ENCODE measurements at regions of chr1 and their contacts with region 1.

Region 1: DNA sequence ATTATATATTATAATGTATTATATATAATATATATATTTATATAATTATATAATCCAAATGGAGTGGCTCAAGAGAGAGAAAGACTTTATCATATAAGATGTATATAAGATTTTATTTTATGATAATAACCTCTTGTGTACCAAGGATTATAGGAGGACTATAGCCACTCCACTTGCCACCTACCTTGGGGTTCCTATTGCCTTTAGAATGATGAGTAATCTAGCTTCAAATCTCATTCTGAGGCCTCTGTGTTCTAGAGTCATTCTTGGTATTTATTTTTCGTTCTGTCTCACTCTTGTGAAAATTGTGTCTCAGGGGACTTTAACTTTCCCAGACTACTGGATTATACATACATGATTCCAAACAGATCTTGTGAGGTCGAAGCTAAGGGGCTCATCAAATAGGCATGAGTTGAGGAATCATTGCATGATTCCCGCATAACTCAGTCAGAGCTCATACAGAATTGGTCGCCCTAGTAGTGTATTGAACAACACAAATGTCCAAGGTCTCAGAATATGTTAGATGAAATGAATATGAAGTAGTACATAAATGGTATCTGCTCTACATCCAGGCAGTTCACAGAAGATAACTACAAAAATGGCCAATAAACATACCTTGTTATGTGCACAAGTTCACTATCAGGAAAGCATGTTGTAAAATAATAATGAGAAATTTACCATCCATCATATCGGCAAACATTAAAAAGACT is 159.5 kb upstream of the RNPC3 start:
- DNase-seq: no peak
- H3K4me3 Mint-ChIP-seq: no peak overlapping the region
- H3K27ac Mint-ChIP-seq: no peak overlapping the region
- H3K4me1 Mint-ChIP-seq: no peaks in the 10 kb centered on the region
- H3K27me3 Mint-ChIP-seq: no peaks in the 10 kb centered on the region

Region 2: DNA sequence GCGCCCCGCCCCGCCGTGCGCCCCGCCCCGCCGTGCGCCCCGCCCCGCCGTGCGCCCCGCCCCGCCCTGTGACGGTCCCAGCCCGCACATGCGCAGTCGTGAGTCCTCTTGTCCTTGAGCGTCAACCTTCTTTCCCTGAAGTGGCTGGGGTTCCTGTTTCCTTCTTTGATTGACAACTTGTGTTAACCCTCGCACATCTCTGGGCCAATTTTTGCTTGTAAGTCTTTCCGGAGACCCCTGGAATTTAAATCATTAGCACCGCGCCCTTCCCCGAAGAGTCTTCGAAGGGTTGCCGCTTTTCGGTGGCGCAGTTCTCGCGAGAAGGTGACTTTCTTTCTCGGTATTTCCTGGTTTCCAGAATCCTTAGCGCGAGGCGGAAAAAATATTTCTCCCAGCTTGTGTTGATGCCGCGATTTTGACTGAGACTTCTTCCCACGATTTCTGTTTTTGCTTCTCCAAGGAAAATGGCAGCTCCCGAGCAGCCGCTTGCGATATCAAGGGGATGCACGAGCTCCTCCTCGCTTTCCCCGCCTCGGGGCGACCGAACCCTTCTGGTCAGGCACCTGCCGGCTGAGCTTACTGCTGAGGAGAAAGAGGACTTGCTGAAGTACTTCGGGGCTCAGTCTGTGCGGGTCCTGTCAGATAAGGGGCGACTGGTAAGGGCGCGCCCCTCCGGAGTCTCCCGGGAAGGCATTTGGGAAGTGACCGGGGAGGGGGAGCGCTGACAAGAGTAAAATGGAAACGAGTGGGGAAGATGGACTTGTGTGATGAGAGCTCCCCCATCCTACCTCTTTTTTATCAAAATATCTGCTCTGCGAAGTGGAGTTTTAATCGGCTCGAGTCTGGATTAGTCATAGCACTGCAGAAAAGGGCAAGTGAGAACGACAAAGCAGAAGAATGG is 159.8 kb after region 1 on chr1 and contains the start of gene RNPC3:
- intact Hi-C with region 1: loop called (anchors 10 kb)
- DNase-seq: peak; percentile 79
- H3K4me3 Mint-ChIP-seq: peak within 1 kb of the TSS; percentile 100
- H3K27ac Mint-ChIP-seq: peak within 1 kb of the TSS; percentile 99
- H3K4me1 Mint-ChIP-seq: peaks cover 46% of the 10 kb centered on the region
- H3K27me3 Mint-ChIP-seq: peaks cover 7% of the 10 kb centered on the region
- total RNA-seq, gene RNPC3: 15.9 and 19.3 TPM in 2 replicates